ENCODE measurements at regions of chr3 and their contacts with region 1.

Region 1: DNA sequence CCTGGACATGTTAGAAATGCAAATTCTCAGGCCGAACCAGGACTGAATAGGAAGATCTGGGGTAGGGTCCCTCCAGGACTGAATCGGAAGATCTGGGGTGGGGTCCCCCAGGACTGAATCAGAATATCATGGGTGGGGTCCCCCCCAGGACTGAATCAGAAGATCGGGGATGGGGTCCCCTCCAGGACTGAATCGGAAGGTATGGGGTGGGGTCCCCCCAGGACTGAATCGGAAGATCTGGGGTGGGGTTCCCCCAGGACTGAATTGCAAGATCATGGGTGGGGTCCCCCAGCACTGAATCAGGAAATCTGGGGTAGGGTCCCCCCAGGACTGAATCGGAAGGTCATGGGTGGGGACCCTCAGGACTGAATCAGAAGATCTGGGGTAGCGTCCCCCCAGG is 48.2 kb upstream of the TNK2 start:
- DNase-seq: peak in 1 of 4 experiments; percentile 1
- ATAC-seq: no peak
- H3K4me3 ChIP-seq: no peak overlapping the region
- H3K27ac ChIP-seq: no peak overlapping the region
- H3K4me1 ChIP-seq: peaks cover 5% of the 10 kb centered on the region in 2 experiments; a peak in 3 of 5 replicates
- H3K27me3 ChIP-seq: no peaks in the 10 kb centered on the region
- CTCF ChIP-seq: no peak
- EP300 ChIP-seq: no peak
- POLR2A ChIP-seq: no peak
- RAD21 ChIP-seq: no peak

Region 2: GRCh38 chr3:195416795-195417194 is 539.8 kb before region 1 on chr3:
- CTCF ChIA-PET with region 1: no interaction called
- POLR2A ChIA-PET with region 1: no interaction called
- in situ Hi-C with region 1: no loop called
- intact Hi-C with region 1: no loop called
- DNase-seq: peak in 1 of 4 experiments; percentile 18
- ATAC-seq: peak; percentile 18; the same call in 2 of the 3 replicates
- H3K4me3 ChIP-seq: no peak overlapping the region
- H3K27ac ChIP-seq: no peak overlapping the region
- H3K4me1 ChIP-seq: no peaks in the 10 kb centered on the region
- H3K27me3 ChIP-seq: no peaks in the 10 kb centered on the region
- CTCF ChIP-seq: no peak
- EP300 ChIP-seq: no peak
- POLR2A ChIP-seq: no peak
- RAD21 ChIP-seq: no peak

Region 3: GRCh38 chr3:195692354-195692685 is 264.3 kb before region 1 on chr3:
- CTCF ChIA-PET with region 1: no interaction called
- POLR2A ChIA-PET with region 1: no interaction called
- in situ Hi-C with region 1: no loop called
- intact Hi-C with region 1: loop called (anchors 5 kb)
- DNase-seq: peak in 1 of 4 experiments; percentile 5
- ATAC-seq: no peak
- H3K4me3 ChIP-seq: no peak overlapping the region
- H3K27ac ChIP-seq: no peak overlapping the region
- H3K4me1 ChIP-seq: peaks cover under 1 to 10% of the 10 kb centered on the region in 2 experiments; a peak in 3 of 5 replicates
- H3K27me3 ChIP-seq: no peaks in the 10 kb centered on the region
- CTCF ChIP-seq: no peak
- EP300 ChIP-seq: no peak
- POLR2A ChIP-seq: peak; percentile 37; the same call in 1 of the 2 replicates
- RAD21 ChIP-seq: no peak

Region 4: DNA sequence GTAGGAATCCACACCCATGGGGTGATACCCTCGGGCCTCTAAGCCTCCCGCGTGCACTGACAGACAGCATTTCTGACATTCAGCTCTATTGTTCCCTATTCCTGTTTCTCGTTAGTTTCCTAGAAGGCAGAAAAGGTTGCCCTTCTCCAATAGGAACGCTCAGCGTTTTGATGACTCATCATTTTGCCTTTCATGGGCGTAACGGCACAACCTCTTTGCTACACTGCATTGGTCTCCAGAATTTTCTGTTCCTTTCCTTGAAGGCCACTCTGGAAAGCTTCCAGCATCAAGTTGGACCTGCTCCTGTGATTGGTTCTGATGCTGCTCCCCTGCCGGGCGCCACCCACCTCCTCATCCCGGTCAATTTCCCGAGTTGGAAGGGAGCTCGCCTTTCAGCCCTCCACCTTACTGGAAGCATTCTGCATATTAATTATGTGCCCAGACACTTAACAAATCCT is 35.2 kb before region 1 on chr3:
- CTCF ChIA-PET with region 1: no interaction called
- POLR2A ChIA-PET with region 1: no interaction called
- in situ Hi-C with region 1: no loop called
- intact Hi-C with region 1: no loop called
- DNase-seq: peak; percentile 26 to 64 (median 38)
- ATAC-seq: peak; percentile 74
- H3K4me3 ChIP-seq: no peak overlapping the region
- H3K27ac ChIP-seq: no peak overlapping the region
- H3K4me1 ChIP-seq: peaks cover 9 to 11% of the 10 kb centered on the region in 2 experiments; a peak in 4 of 5 replicates
- H3K27me3 ChIP-seq: peaks cover 9 to 14% of the 10 kb centered on the region in 2 experiments
- CTCF ChIP-seq: no peak
- EP300 ChIP-seq: no peak
- POLR2A ChIP-seq: no peak
- RAD21 ChIP-seq: no peak

Region 5: GRCh38 chr3:195932456-195933430 is 23.8 kb before region 1 on chr3:
- CTCF ChIA-PET with region 1: no interaction called
- POLR2A ChIA-PET with region 1: no interaction called
- in situ Hi-C with region 1: no loop called
- intact Hi-C with region 1: no loop called
- DNase-seq: no peak
- ATAC-seq: peak; percentile 32; the same call in 1 of the 3 replicates
- H3K4me3 ChIP-seq: no peak overlapping the region
- H3K27ac ChIP-seq: no peak overlapping the region
- H3K4me1 ChIP-seq: no peaks in the 10 kb centered on the region
- H3K27me3 ChIP-seq: no peaks in the 10 kb centered on the region; a peak in 1 of 5 replicates
- CTCF ChIP-seq: no peak
- EP300 ChIP-seq: no peak
- POLR2A ChIP-seq: no peak
- RAD21 ChIP-seq: no peak

Region 6: DNA sequence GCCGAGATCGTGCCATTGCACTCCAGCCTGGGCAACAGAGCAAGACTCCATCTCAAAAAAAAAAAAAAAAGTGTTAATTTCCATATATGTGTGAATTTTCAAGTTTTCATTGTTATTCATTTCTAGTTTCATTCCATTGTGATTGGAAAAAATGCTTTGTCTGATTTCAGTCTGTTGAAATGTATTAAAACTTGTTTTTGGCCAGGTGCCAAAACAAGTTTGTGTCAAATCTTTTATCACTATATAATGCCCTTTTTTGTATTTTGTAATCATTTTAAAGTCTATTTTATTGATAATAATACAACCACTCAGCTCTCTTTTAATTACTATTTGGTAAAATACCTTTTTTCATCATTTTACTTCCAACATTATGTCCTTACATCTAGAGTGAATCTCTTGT is 82.8 kb after region 1 on chr3:
- CTCF ChIA-PET with region 1: no interaction called
- POLR2A ChIA-PET with region 1: no interaction called
- in situ Hi-C with region 1: no loop called
- intact Hi-C with region 1: no loop called
- DNase-seq: no peak
- ATAC-seq: no peak
- H3K4me3 ChIP-seq: no peak overlapping the region
- H3K27ac ChIP-seq: no peak overlapping the region
- H3K4me1 ChIP-seq: no peaks in the 10 kb centered on the region
- H3K27me3 ChIP-seq: no peaks in the 10 kb centered on the region
- CTCF ChIP-seq: no peak
- EP300 ChIP-seq: no peak
- POLR2A ChIP-seq: no peak
- RAD21 ChIP-seq: no peak